ENCODE measurements at regions of chrX and their contacts with region 1.

Region 1: DNA sequence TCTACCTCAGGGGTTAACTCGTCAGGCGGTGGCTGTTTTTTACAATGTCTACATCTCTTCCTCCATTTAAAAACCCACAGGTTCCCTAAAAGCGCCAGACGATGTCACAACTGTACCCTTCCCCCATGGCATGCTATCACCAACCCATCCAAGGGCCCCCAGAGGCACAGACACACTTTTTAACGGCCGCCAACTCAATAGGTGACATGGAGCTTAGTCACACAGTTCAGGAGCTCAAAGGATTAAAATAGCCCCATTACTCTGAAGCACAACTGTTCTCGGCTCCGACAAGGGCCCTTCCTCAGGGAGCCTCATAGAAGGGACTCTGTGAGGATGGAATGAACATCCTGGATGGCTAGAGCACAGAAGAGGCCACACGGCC is 12.4 kb downstream of the SH3KBP1 start:
- DNase-seq: peak; percentile 82 to 87 (median 85)
- H3K4me3 ChIP-seq: peak overlapping the region; percentile 30 to 68 (median 43)
- H3K4me3 Mint-ChIP-seq: peak overlapping the region; percentile 77 to 88
- H3K27ac ChIP-seq: peak overlapping the region; percentile 81 to 89
- H3K27ac Mint-ChIP-seq: peak overlapping the region; percentile 90 to 98 (median 94)
- H3K4me1 ChIP-seq: peaks cover 90 to 91% of the 10 kb centered on the region in 2 donors
- H3K4me1 Mint-ChIP-seq: peaks cover 80% of the 10 kb centered on the region
- H3K27me3 ChIP-seq: no peaks in the 10 kb centered on the region
- H3K27me3 Mint-ChIP-seq: peaks cover 0 to 2% (median 0%) of the 10 kb centered on the region in 3 donors
- CTCF ChIP-seq: no peak

Region 2: DNA sequence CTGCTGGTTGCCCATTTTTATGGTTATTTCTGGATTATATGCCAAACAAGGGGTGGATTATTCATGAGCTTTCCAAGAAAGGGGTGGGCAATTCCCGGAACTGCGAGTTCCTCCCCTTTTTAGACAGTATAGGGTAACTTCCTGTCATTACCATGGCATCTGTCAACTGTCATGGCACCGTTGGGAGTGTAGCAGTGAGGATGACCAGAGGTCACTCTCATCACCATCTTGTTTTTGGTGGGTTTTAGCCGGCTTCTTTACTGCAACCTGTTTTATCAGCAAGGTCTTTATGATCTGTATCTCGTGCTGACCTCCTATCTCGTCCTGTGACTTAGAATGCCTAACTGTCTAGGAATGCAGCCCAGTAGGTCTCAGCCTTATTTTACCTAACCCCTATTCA is 45.2 kb before region 1 on chrX:
- intact Hi-C with region 1: no loop called
- DNase-seq: no peak
- H3K4me3 ChIP-seq: no peak overlapping the region
- H3K4me3 Mint-ChIP-seq: no peak overlapping the region
- H3K27ac ChIP-seq: no peak overlapping the region
- H3K27ac Mint-ChIP-seq: no peak overlapping the region
- H3K4me1 ChIP-seq: peaks cover 8% of the 10 kb centered on the region in 2 donors
- H3K4me1 Mint-ChIP-seq: peaks cover 19% of the 10 kb centered on the region
- H3K27me3 ChIP-seq: no peaks in the 10 kb centered on the region
- H3K27me3 Mint-ChIP-seq: peaks cover 0 to 3% (median 0%) of the 10 kb centered on the region in 3 donors
- CTCF ChIP-seq: no peak

Region 3: GRCh38 chrX:19840899-19841648 is 34.0 kb before region 1 on chrX:
- intact Hi-C with region 1: loop called (anchors 5 kb)
- DNase-seq: no peak
- H3K4me3 ChIP-seq: no peak overlapping the region
- H3K4me3 Mint-ChIP-seq: no peak overlapping the region
- H3K27ac ChIP-seq: no peak overlapping the region
- H3K27ac Mint-ChIP-seq: peak overlapping the region in 1 of 7 donors; percentile 69
- H3K4me1 ChIP-seq: peaks cover 41 to 48% of the 10 kb centered on the region in 2 donors
- H3K4me1 Mint-ChIP-seq: peaks cover 54% of the 10 kb centered on the region
- H3K27me3 ChIP-seq: no peaks in the 10 kb centered on the region
- H3K27me3 Mint-ChIP-seq: peaks cover 0 to 8% (median 2%) of the 10 kb centered on the region in 3 donors
- CTCF ChIP-seq: no peak

Measured in CD14-positive monocyte (primary cell).